ENCODE measurements at regions of chr20 and their contacts with region 1.

Region 1: GRCh38 chr20:31723319-31724078 is 831 bp upstream of the BCL2L1 start:
- DNase-seq: peak; percentile 100
- ATAC-seq: peak; percentile 91
- H3K4me3 ChIP-seq: peak overlapping the region; percentile 65 to 99 (median 88)
- H3K4me3 Mint-ChIP-seq: peak overlapping the region; percentile 92
- H3K27ac ChIP-seq: peak overlapping the region; percentile 84 to 97
- H3K27ac Mint-ChIP-seq: peak overlapping the region; percentile 95
- H3K4me1 ChIP-seq: peaks cover 37 to 40% of the 10 kb centered on the region in 2 donors
- H3K4me1 Mint-ChIP-seq: peaks cover 43% of the 10 kb centered on the region
- H3K27me3 ChIP-seq: no peaks in the 10 kb centered on the region
- H3K27me3 Mint-ChIP-seq: no peaks in the 10 kb centered on the region
- CTCF ChIP-seq: peak; percentile 83

Region 2: DNA sequence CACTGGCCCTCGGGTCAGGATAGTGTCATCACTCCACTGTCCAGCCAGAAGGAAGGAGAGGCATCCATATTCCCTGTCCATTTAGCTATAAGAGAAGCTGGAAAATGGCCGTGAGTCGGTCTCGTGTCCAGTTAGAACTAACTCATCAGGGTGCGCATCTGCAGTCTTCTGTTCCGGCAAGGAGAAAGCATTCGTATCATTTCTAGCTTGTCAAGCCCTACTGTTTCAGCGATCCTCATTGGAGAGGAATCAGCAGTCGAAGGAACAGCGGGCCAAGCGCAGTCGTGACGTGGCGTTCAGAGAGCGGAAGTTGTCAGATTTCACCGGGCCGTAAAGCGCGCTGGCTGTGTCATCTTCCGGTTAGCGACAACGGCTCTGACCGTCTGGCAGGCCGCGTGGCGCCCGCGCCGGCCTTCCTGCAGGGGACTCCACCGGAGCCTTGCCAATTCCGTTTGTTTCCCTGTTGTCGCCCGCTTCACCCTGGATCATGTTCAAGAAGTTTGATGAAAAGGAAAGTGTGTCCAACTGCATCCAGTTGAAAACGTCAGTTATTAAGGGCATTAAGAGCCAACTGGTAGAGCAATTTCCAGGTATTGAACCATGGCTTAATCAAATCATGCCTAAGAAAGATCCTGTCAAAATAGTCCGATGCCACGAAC is 176.4 kb before region 1 on chr20:
- CTCF ChIA-PET with region 1: no interaction called
- POLR2A ChIA-PET with region 1: no interaction called
- intact Hi-C with region 1: no loop called
- DNase-seq: peak; percentile 88
- ATAC-seq: peak; percentile 82
- H3K4me3 ChIP-seq: peak overlapping the region; percentile 48 to 81 (median 65)
- H3K4me3 Mint-ChIP-seq: peak overlapping the region; percentile 97
- H3K27ac ChIP-seq: peak overlapping the region; percentile 56 to 85
- H3K27ac Mint-ChIP-seq: peak overlapping the region; percentile 98
- H3K4me1 ChIP-seq: peaks cover 8 to 9% of the 10 kb centered on the region in 2 donors
- H3K4me1 Mint-ChIP-seq: peaks cover 19% of the 10 kb centered on the region
- H3K27me3 ChIP-seq: no peaks in the 10 kb centered on the region
- H3K27me3 Mint-ChIP-seq: no peaks in the 10 kb centered on the region
- CTCF ChIP-seq: no peak

Region 3: GRCh38 chr20:31572701-31573554 is 150.6 kb before region 1 on chr20:
- CTCF ChIA-PET with region 1: interaction called, 15 read pairs
- POLR2A ChIA-PET with region 1: interaction called, 6 read pairs
- intact Hi-C with region 1: loop called (anchors 2 kb)
- DNase-seq: peak; percentile 90
- ATAC-seq: peak; percentile 94
- H3K4me3 ChIP-seq: peak overlapping the region; percentile 51 to 83 (median 71)
- H3K4me3 Mint-ChIP-seq: peak overlapping the region; percentile 92
- H3K27ac ChIP-seq: peak overlapping the region; percentile 49 to 76
- H3K27ac Mint-ChIP-seq: peak overlapping the region; percentile 80
- H3K4me1 ChIP-seq: peaks cover 10 to 18% of the 10 kb centered on the region in 2 donors
- H3K4me1 Mint-ChIP-seq: peaks cover 19% of the 10 kb centered on the region
- H3K27me3 ChIP-seq: no peaks in the 10 kb centered on the region
- H3K27me3 Mint-ChIP-seq: no peaks in the 10 kb centered on the region
- CTCF ChIP-seq: no peak

Region 4: DNA sequence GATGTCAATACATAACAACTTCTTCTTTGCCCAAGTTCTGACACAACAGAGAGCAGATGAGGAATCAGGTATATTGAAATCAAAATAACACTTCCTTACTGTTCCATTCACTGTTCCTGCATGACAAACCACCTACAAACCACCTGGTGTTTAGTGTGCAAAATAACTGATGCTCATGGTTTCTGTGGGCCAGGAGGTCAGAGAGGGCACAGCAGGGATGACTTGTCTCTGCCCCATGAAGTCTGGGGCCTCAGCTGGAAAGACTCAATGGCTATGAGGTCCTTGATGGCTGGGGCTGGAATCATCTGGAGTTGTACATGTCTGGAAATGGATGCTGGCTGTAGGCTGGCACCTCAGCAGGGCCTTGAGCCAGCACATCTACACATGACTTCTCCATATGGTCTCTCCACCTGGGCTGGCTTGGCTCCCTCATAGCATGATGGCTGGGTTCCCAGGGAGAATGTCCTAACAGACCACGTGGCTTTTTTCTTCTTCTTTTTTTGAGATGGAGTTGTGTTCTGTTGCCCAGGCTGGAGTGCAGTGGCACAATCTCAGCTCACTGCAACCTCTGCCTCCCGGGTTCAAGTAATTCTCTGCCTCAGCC is 93.2 kb before region 1 on chr20:
- CTCF ChIA-PET with region 1: interaction called, 33 read pairs
- POLR2A ChIA-PET with region 1: interaction called, 5 read pairs
- intact Hi-C with region 1: loop called (anchors 1 kb)
- DNase-seq: no peak
- ATAC-seq: no peak
- H3K4me3 ChIP-seq: no peak overlapping the region
- H3K4me3 Mint-ChIP-seq: no peak overlapping the region
- H3K27ac ChIP-seq: no peak overlapping the region
- H3K27ac Mint-ChIP-seq: no peak overlapping the region
- H3K4me1 ChIP-seq: no peaks in the 10 kb centered on the region
- H3K4me1 Mint-ChIP-seq: peaks cover 4% of the 10 kb centered on the region
- H3K27me3 ChIP-seq: no peaks in the 10 kb centered on the region
- H3K27me3 Mint-ChIP-seq: no peaks in the 10 kb centered on the region
- CTCF ChIP-seq: no peak

Region 5: DNA sequence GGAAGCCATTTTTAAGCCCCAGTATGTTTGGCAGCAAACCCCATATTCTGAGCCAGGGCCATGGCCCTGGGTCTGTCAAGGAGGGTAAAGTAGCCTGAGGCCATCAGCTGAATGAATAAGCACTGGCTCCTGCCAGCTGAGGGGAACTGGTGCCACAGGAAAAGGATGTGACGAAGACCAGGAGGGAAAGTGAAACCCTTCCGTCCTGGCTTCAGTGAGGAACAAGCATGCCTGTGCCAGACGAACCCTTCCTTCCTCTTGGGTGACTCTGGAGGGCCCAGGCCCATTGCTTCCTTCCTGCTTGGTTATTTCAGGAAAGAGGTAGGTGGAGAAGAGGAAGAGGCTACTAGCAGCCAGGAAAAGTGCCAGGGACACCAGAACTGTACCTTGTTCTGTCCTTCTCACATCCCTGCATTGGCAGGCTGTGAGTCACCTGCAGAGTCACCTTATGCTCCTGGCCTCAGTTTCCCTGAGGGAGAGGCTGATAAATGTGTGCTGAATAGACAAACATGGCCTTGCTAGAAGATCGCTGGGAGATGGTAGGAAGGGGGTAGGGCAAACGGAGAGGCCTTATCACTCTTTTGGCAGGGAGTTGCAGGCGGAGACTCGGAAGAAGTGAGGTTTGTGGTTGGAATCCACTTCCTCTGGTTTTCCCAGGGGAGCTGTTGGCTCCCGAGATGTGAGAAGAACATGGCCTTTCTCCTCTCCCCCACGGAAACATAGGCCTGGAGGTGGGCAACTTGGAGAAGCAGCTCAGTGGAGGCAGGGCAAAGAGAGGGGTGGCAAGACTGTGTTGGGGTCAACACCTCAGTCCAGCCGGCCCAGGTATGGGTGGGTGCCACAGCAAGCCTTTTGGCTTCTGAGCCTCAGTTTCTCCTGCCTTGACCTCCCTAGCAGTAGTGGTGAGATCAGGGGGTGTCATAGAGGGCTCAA is 48.3 kb before region 1 on chr20:
- CTCF ChIA-PET with region 1: interaction called, 23 read pairs
- POLR2A ChIA-PET with region 1: interaction called, 8 read pairs
- intact Hi-C with region 1: loop called (anchors 1 kb)
- DNase-seq: peak; percentile 79
- ATAC-seq: peak; percentile 80
- H3K4me3 ChIP-seq: peak overlapping the region; percentile 52 to 90 (median 81)
- H3K4me3 Mint-ChIP-seq: peak overlapping the region; percentile 92
- H3K27ac ChIP-seq: peak overlapping the region; percentile 64 to 92
- H3K27ac Mint-ChIP-seq: peak overlapping the region; percentile 93
- H3K4me1 ChIP-seq: peaks cover 26 to 34% of the 10 kb centered on the region in 2 donors
- H3K4me1 Mint-ChIP-seq: peaks cover 48% of the 10 kb centered on the region
- H3K27me3 ChIP-seq: no peaks in the 10 kb centered on the region
- H3K27me3 Mint-ChIP-seq: no peaks in the 10 kb centered on the region
- CTCF ChIP-seq: no peak

Region 6: DNA sequence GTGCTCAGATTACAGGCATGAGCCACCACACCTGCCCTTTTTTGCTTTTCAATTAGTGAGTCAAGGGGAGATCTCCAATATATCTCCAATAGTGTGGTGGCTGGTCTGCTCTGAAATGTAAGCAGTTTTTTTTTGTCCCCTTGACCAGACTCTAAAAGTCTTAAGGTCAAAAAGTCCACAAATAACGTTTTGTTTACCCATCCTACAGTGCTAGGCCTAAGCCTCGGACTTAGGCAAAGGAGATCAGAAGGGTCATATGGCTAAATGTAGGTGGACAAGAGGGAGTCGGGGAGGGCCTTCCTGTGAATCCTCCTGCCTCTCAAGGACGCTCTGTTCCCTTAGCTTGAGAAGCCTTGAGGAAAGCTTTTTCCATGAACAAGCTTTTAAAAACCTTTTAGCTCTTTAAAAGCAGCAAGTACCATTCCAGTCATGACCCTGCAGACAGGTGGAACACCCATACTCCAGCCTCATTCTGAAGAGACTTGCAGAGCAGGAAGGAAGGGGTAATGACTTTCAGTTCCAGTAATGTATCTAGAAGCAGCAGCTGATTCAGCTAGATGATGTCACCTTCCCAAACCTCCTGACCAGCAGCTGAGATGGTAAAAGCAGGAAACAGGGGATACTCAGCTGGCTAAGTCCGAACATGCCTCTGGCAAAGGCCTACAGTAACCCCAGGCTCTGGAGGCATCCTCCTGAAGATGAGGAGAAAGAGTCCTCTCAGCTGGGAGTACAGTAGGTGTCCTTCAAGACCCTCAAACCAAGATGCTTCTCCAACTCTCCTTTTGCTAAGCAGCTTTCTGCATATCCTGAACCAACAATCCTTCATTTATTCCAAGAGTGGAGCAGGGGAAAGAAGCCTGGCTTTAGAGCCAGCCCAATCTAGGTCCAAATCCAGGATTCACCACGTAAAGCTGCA is 24.4 kb before region 1 on chr20:
- CTCF ChIA-PET with region 1: interaction called, 10 read pairs
- POLR2A ChIA-PET with region 1: no interaction called
- intact Hi-C with region 1: no loop called
- DNase-seq: peak; percentile 36
- ATAC-seq: peak; percentile 53
- H3K4me3 ChIP-seq: no peak overlapping the region
- H3K4me3 Mint-ChIP-seq: peak overlapping the region; percentile 7
- H3K27ac ChIP-seq: peak overlapping the region; percentile 9 to 22
- H3K27ac Mint-ChIP-seq: no peak overlapping the region
- H3K4me1 ChIP-seq: peaks cover 10 to 13% of the 10 kb centered on the region in 2 donors
- H3K4me1 Mint-ChIP-seq: peaks cover 30% of the 10 kb centered on the region
- H3K27me3 ChIP-seq: no peaks in the 10 kb centered on the region
- H3K27me3 Mint-ChIP-seq: no peaks in the 10 kb centered on the region
- CTCF ChIP-seq: no peak

Region 7: GRCh38 chr20:31894980-31895675 is 171.6 kb after region 1 on chr20:
- CTCF ChIA-PET with region 1: no interaction called
- POLR2A ChIA-PET with region 1: no interaction called
- intact Hi-C with region 1: no loop called
- DNase-seq: peak; percentile 89
- ATAC-seq: peak; percentile 100
- H3K4me3 ChIP-seq: peak overlapping the region in 1 of 5 experiments; percentile 40
- H3K4me3 Mint-ChIP-seq: peak overlapping the region; percentile 28
- H3K27ac ChIP-seq: peak overlapping the region; percentile 94
- H3K27ac Mint-ChIP-seq: peak overlapping the region; percentile 79
- H3K4me1 ChIP-seq: peaks cover 10 to 15% of the 10 kb centered on the region in 2 donors
- H3K4me1 Mint-ChIP-seq: peaks cover 15% of the 10 kb centered on the region
- H3K27me3 ChIP-seq: no peaks in the 10 kb centered on the region
- H3K27me3 Mint-ChIP-seq: no peaks in the 10 kb centered on the region
- CTCF ChIP-seq: no peak